GM18951 (cell line): ENCODE measurements at regions of chr19 and their contacts with region 1.

Region 1: DNA sequence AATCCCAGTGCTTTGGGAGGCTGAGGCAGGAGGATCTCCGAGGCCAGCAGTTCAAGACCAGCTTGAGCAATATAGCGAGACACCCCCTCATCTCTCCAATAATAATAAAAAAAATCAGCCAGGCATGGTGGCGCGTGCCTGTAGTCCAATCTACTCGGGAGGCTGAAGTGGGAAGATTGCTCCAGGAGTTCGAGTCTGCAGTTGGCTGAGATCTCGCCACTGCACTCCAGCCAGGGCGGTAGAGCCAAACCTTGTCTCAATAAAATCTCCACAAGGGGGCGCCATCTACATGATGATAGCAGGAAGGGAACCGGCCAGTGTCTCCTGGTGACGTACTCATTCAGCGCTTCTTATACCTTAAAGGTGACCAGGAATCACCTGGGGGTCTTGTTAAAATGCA is 13.6 kb upstream of the C5AR1 start:
- POLR2A ChIP-seq: no peak

Region 2: GRCh38 chr19:47156861-47157430 is 139.1 kb before region 1 on chr19:
- in situ Hi-C with region 1: no loop called
- POLR2A ChIP-seq: no peak

Region 3: DNA sequence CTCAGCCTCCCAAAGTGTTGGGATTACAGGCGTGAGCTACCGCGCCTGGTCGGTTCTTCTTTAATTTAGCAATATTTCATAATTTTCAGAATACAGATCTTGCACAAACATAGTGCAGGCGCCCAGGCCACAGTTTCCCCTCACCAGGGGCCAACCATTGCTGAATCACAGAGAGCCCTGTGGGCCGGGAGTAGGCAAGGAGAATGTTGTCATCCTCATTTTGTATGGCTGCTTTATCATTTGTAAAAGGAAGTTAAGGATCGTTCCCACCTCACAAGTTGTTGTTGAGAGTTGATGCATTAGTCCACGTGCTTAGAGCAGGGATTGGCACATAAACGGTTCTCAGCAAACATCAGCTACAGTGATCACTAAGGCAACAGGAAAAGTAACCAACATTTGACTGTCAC is 93.1 kb after region 1 on chr19:
- in situ Hi-C with region 1: loop called (anchors 5 kb)
- POLR2A ChIP-seq: no peak